ENCODE measurements at regions of chr15 and their contacts with region 1.

Region 1: GRCh38 chr15:67863442-67863987 is 23.7 kb upstream of the RNU6-1 start:
- DNase-seq: peak; percentile 89 to 95 (median 93)
- ATAC-seq: peak; percentile 96 to 97
- H3K4me3 ChIP-seq: peak overlapping the region; percentile 12
- H3K27ac ChIP-seq: no peak overlapping the region
- H3K4me1 ChIP-seq: no peaks in the 10 kb centered on the region
- H3K27me3 ChIP-seq: no peaks in the 10 kb centered on the region

Region 2: GRCh38 chr15:67784090-67784781 is 79.3 kb before region 1 on chr15:
- intact Hi-C with region 1: no loop called
- DNase-seq: no peak
- ATAC-seq: no peak
- H3K4me3 ChIP-seq: no peak overlapping the region
- H3K27ac ChIP-seq: no peak overlapping the region
- H3K4me1 ChIP-seq: no peaks in the 10 kb centered on the region
- H3K27me3 ChIP-seq: no peaks in the 10 kb centered on the region

Region 3: GRCh38 chr15:67897646-67898339 is 34.3 kb after region 1 on chr15:
- intact Hi-C with region 1: no loop called
- DNase-seq: no peak
- ATAC-seq: peak in 1 of 2 donors; percentile 36
- H3K4me3 ChIP-seq: no peak overlapping the region
- H3K27ac ChIP-seq: no peak overlapping the region
- H3K4me1 ChIP-seq: no peaks in the 10 kb centered on the region
- H3K27me3 ChIP-seq: no peaks in the 10 kb centered on the region

Region 4: DNA sequence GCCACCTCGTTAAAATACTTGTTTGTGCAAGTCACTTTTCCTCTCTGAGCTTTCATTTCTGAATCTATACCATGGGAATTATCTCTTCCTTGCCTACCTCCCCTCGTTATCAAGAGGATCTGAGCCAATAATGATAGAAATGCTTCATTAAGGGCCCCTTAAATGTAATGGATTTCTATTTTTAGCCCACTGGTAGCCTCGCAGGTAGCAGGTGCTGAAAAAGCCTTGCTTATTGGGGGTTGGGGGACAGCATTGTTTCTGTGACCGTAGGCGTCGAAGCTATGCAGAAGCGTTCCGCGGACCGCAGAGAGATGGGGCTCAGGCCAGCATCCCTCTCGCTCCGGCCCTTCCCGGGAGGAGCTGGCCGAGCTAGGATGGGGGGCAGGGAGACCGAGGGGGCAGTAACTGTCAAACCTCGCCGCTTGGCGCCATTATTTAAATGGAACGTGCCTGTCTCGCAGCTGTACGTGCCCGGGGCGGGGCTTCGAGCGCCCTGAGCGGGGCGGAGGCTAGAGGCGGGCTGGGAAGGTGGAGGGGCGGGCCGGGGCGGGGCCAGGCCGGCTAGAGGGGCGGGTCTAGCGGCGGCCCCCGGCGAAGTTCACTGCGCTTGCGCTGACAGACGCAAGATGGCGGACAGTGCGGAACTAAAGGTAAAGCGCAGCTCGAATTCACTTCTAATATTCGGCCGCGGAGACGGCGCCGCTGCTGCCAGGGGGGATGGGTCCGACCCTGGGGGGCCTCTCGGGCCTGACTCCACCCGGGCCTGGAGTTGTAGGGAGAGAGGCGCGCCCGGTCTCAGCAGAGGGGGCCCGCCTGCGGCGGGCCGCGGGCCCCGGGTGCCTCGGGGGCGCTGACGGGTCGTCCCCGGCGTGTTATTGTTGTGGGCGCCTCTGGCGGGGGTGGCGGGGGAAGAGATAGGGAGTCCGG is 190.4 kb after region 1 on chr15 and contains the start of gene PIAS1:
- intact Hi-C with region 1: loop called in 1 of 4 experiments (anchors 5 kb)
- DNase-seq: peak; percentile 97 to 98 (median 98)
- ATAC-seq: peak; percentile 99
- H3K4me3 ChIP-seq: peak within 1 kb of the TSS; percentile 98
- H3K27ac ChIP-seq: peak within 1 kb of the TSS; percentile 92
- H3K4me1 ChIP-seq: peaks cover 4% of the 10 kb centered on the region
- H3K27me3 ChIP-seq: no peaks in the 10 kb centered on the region
- total RNA-seq, gene PIAS1: 34.1 to 38.2 (median 35.9) TPM

Region 5: GRCh38 chr15:68154923-68155559 is 291.5 kb after region 1 on chr15:
- intact Hi-C with region 1: loop called (anchors 2 to 5 kb)
- DNase-seq: peak in 2 of 3 donors; percentile 27 to 46
- ATAC-seq: peak; percentile 47 to 69
- H3K4me3 ChIP-seq: no peak overlapping the region
- H3K27ac ChIP-seq: no peak overlapping the region
- H3K4me1 ChIP-seq: no peaks in the 10 kb centered on the region
- H3K27me3 ChIP-seq: no peaks in the 10 kb centered on the region

Region 6: GRCh38 chr15:68210821-68211655 is 347.5 kb after region 1 on chr15:
- intact Hi-C with region 1: loop called in 1 of 4 experiments (anchors 10 kb)
- DNase-seq: peak; percentile 75 to 92 (median 90)
- ATAC-seq: peak; percentile 68 to 69
- H3K4me3 ChIP-seq: no peak overlapping the region
- H3K27ac ChIP-seq: no peak overlapping the region
- H3K4me1 ChIP-seq: no peaks in the 10 kb centered on the region
- H3K27me3 ChIP-seq: no peaks in the 10 kb centered on the region